MCF 10A (cell line): ENCODE measurements at regions of chr1 and their contacts with region 1.

Region 1: DNA sequence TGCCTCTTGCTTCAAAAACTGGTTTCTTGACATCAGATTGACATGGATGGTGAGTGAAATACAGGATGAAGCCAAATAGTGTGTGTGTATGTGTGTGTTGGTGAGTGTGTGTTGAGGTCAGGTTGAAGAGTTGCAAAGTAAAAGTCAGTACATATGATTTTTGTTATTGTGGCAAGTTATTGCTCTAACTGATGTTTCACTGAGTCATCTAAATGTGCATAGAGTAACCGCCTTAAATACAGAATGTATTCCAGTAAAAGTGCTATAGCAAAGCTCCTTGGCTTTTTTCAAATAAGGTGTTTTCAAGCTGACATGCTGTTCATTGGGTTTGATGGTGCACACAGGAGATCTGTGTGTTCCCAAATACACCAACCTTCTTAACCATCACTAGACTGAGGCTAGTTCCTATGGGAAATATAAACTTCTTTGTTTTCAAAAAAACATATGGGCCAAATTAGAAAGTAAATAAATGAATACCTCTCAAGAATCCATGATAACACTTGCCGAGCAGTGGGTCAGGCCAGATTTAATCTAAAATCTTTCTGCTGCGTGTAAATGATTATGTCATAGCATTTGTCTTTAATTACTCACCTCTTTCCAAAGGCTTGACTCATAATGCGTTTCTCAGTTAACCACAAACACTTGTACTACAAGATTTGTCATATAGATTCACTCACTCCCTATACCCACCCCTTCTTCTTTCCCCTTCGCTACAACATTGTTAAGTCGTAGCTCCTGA is 151.1 kb downstream of the LYPLAL1 start:
- DNase-seq: peak; percentile 97
- H3K4me3 Mint-ChIP-seq: no peak overlapping the region
- H3K27ac Mint-ChIP-seq: no peak overlapping the region
- H3K4me1 Mint-ChIP-seq: peaks cover 16% of the 10 kb centered on the region
- H3K27me3 Mint-ChIP-seq: peaks cover 100% of the 10 kb centered on the region
- CTCF ChIP-seq: no peak

Region 2: DNA sequence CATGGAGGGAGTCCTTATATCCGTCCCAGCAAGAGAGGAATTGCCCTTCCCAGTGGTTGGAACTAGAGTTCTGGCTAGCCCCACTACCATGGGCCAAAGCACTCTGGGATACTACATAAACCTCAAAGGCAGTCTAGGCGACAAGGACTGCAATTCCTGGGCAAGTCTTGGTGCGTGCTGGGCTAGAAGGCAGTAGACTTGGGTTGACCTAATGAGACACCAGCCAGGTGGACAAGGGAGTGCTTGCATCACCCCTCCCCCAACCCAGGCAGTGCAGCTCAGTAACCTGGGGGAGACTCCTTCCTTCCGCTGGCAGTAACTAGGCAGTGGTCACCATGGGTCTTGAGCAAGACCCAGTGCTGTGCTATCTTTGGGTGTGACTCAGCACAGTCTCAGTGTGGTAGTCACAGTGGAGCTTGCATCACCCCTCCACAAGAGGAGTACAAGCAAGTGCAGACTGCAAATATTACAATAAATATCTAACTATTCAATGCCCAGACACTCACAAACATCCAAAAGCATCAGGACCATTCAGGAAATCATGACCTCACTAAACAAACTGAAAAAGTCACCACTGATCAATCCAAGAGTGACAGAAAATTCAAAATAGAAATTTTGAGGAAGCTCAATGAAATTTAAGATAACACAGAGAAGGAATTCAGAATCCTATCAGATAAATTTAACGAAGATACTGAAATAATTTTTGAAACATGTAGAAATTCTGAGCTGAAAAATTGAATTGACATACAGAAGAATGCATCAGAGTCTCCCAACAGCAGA is 235.8 kb before region 1 on chr1:
- CTCF ChIA-PET with region 1: interaction called, 6 read pairs
- POLR2A ChIA-PET with region 1: no interaction called
- intact Hi-C with region 1: loop called (anchors 5 kb)
- DNase-seq: peak; percentile 100
- H3K4me3 Mint-ChIP-seq: no peak overlapping the region
- H3K27ac Mint-ChIP-seq: peak overlapping the region; percentile 37
- H3K4me1 Mint-ChIP-seq: peaks cover 33% of the 10 kb centered on the region
- H3K27me3 Mint-ChIP-seq: no peaks in the 10 kb centered on the region
- CTCF ChIP-seq: no peak

Region 3: GRCh38 chr1:219277304-219278105 is 47.3 kb before region 1 on chr1:
- CTCF ChIA-PET with region 1: no interaction called
- POLR2A ChIA-PET with region 1: no interaction called
- intact Hi-C with region 1: no loop called
- DNase-seq: no peak
- H3K4me3 Mint-ChIP-seq: no peak overlapping the region
- H3K27ac Mint-ChIP-seq: no peak overlapping the region
- H3K4me1 Mint-ChIP-seq: no peaks in the 10 kb centered on the region
- H3K27me3 Mint-ChIP-seq: no peaks in the 10 kb centered on the region
- CTCF ChIP-seq: no peak

Region 4: GRCh38 chr1:219340796-219341195 is 16.0 kb after region 1 on chr1:
- CTCF ChIA-PET with region 1: interaction called, 4 read pairs
- POLR2A ChIA-PET with region 1: interaction called, 11 read pairs
- intact Hi-C with region 1: no loop called
- DNase-seq: no peak
- H3K4me3 Mint-ChIP-seq: no peak overlapping the region
- H3K27ac Mint-ChIP-seq: no peak overlapping the region
- H3K4me1 Mint-ChIP-seq: no peaks in the 10 kb centered on the region
- H3K27me3 Mint-ChIP-seq: peaks cover 100% of the 10 kb centered on the region
- CTCF ChIP-seq: no peak

Region 5: GRCh38 chr1:219401724-219402625 is 77.2 kb after region 1 on chr1:
- CTCF ChIA-PET with region 1: no interaction called
- POLR2A ChIA-PET with region 1: no interaction called
- intact Hi-C with region 1: no loop called
- DNase-seq: no peak
- H3K4me3 Mint-ChIP-seq: no peak overlapping the region
- H3K27ac Mint-ChIP-seq: no peak overlapping the region
- H3K4me1 Mint-ChIP-seq: no peaks in the 10 kb centered on the region
- H3K27me3 Mint-ChIP-seq: peaks cover 30% of the 10 kb centered on the region
- CTCF ChIP-seq: no peak